ENCODE measurements at regions of chr16 and their contacts with region 1.

Region 1: DNA sequence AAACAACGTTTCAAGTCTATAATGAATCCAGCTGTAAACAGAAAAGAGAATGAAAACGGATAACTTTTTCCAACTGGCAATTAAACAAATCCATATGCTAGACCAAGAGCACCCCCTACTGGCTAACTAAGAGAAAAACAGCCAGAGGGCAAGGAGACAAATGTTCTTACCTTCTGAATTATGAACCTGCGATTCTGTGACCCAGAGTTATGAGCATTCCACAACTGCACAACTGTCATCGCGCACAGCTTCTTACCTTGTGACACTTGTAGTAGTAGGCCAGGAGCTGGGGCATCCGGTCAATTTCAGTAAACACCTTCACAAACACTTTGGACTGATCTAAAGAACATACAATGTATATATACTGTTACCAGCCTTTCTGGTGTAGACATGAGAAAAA is 18.6 kb downstream of the COG7 start:
- DNase-seq: peak; percentile 55
- H3K4me3 ChIP-seq: no peak overlapping the region
- H3K27ac ChIP-seq: peak overlapping the region; percentile 71
- H3K4me1 ChIP-seq: peaks cover 10% of the 10 kb centered on the region
- H3K27me3 ChIP-seq: no peaks in the 10 kb centered on the region
- CTCF ChIP-seq: peak; percentile 85

Region 2: GRCh38 chr16:23182460-23183309 is 251.7 kb before region 1 on chr16 and contains the start of gene SCNN1G:
- intact Hi-C with region 1: loop called (anchors 1 kb)
- DNase-seq: peak; percentile 90
- H3K4me3 ChIP-seq: peak within 1 kb of the TSS; percentile 63
- H3K27ac ChIP-seq: no peak within 1 kb of the TSS
- H3K4me1 ChIP-seq: peaks cover 12% of the 10 kb centered on the region
- H3K27me3 ChIP-seq: peaks cover 7% of the 10 kb centered on the region
- CTCF ChIP-seq: peak; percentile 98
- total RNA-seq, gene SCNN1G: 2.0 to 3.4 TPM